ENCODE measurements at regions of chrX and their contacts with region 1.

Region 1: GRCh38 chrX:150693775-150694574 is 779 bp downstream of the MTMR1 start:
- DNase-seq: no peak
- ATAC-seq: peak; percentile 74
- H3K4me3 ChIP-seq: peak overlapping the region; percentile 62
- H3K27ac ChIP-seq: peak overlapping the region; percentile 90
- H3K4me1 ChIP-seq: peaks cover 13% of the 10 kb centered on the region
- H3K27me3 ChIP-seq: no peaks in the 10 kb centered on the region
- CTCF ChIP-seq: no peak
- EP300 ChIP-seq: no peak
- POLR2A ChIP-seq: no peak
- RAD21 ChIP-seq: no peak

Region 2: DNA sequence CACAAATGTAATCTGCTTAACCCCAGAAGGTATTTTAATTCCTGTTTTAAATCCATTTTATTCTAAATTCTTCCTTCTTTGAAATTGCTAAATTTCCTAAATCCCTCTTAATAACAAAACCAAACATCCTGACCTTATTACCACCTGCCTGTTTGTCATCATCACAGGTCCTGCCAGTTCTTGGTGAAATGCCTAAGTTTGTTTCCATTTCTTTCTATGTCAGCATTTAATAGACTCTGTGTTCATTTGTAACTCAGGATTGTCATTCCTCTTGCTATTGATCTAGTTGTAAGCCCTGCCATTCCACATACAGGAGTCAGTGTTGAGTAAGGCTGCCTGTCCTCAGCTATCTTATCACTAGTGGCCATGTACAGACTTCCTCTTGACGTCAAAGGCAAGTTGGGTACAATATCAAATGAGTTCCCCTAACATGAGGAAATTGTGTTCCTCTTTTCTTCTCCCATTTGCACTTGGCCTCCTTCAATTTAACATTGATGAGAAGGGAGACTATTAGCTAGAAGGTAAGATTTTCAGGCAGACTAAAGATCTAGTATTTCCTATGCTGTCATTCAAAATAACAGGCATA is 1753.5 kb before region 1 on chrX:
- CTCF ChIA-PET with region 1: no interaction called
- POLR2A ChIA-PET with region 1: no interaction called
- RAD21 ChIA-PET with region 1: no interaction called
- SMC1A ChIA-PET with region 1: no interaction called
- in situ Hi-C with region 1: no loop called
- intact Hi-C with region 1: no loop called
- DNase-seq: no peak
- ATAC-seq: no peak
- H3K4me3 ChIP-seq: no peak overlapping the region
- H3K27ac ChIP-seq: no peak overlapping the region
- H3K4me1 ChIP-seq: no peaks in the 10 kb centered on the region
- H3K27me3 ChIP-seq: no peaks in the 10 kb centered on the region
- CTCF ChIP-seq: no peak
- EP300 ChIP-seq: no peak
- POLR2A ChIP-seq: no peak
- RAD21 ChIP-seq: no peak

Region 3: GRCh38 chrX:149504915-149505651 is 1188.9 kb before region 1 on chrX and contains the start of gene IDS:
- CTCF ChIA-PET with region 1: no interaction called
- POLR2A ChIA-PET with region 1: no interaction called
- RAD21 ChIA-PET with region 1: no interaction called
- SMC1A ChIA-PET with region 1: no interaction called
- in situ Hi-C with region 1: loop called (anchors 25 kb)
- intact Hi-C with region 1: no loop called
- DNase-seq: peak; percentile 37
- ATAC-seq: peak; percentile 80
- H3K4me3 ChIP-seq: peak within 1 kb of the TSS; percentile 65
- H3K27ac ChIP-seq: peak within 1 kb of the TSS; percentile 67
- H3K4me1 ChIP-seq: peaks cover 21% of the 10 kb centered on the region
- H3K27me3 ChIP-seq: no peaks in the 10 kb centered on the region; a peak in 2 of 4 replicates
- CTCF ChIP-seq: no peak
- EP300 ChIP-seq: no peak
- POLR2A ChIP-seq: peak; percentile 92
- RAD21 ChIP-seq: no peak
- polyA plus RNA-seq, gene IDS: 6.1 to 9.6 TPM

Region 4: GRCh38 chrX:150575416-150575808 is 118.6 kb before region 1 on chrX:
- CTCF ChIA-PET with region 1: no interaction called
- POLR2A ChIA-PET with region 1: no interaction called
- RAD21 ChIA-PET with region 1: no interaction called
- SMC1A ChIA-PET with region 1: no interaction called
- in situ Hi-C with region 1: no loop called
- intact Hi-C with region 1: loop called (anchors 5 kb)
- DNase-seq: no peak
- ATAC-seq: peak; percentile 35
- H3K4me3 ChIP-seq: peak overlapping the region; percentile 34; the same call in 1 of the 2 replicates
- H3K27ac ChIP-seq: peak overlapping the region; percentile 34
- H3K4me1 ChIP-seq: peaks cover 14% of the 10 kb centered on the region; the same call in 1 of the 2 replicates
- H3K27me3 ChIP-seq: no peaks in the 10 kb centered on the region
- CTCF ChIP-seq: no peak
- EP300 ChIP-seq: no peak
- POLR2A ChIP-seq: no peak
- RAD21 ChIP-seq: no peak

Region 5: DNA sequence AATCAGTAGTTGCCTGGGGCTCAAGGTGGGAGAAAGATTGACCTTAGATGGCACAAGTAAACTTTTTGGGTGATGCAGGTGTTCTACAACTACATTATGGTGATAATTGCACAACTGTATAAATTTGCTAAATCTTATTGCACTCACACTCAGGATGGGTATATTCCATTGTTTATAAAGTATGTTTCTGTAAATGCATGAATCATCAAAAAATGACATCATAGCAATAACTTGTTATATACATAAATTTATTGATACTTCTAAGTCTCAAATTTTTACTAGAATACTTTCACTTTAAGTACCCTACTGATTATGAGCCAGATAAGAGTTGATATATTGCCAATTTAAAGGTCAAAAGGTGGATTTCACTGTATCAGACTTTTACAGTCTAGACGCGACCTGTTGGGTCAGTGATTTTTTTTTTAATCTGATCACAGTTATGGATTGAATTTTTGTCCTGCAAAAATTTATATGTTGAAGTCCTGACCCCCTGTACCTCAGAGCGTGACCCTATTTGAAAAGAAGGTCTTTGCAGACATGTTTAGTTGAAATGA is 38.2 kb before region 1 on chrX:
- CTCF ChIA-PET with region 1: no interaction called
- POLR2A ChIA-PET with region 1: no interaction called
- RAD21 ChIA-PET with region 1: no interaction called
- SMC1A ChIA-PET with region 1: no interaction called
- in situ Hi-C with region 1: no loop called
- intact Hi-C with region 1: no loop called
- DNase-seq: no peak
- ATAC-seq: no peak
- H3K4me3 ChIP-seq: no peak overlapping the region
- H3K27ac ChIP-seq: no peak overlapping the region
- H3K4me1 ChIP-seq: no peaks in the 10 kb centered on the region
- H3K27me3 ChIP-seq: no peaks in the 10 kb centered on the region
- CTCF ChIP-seq: no peak
- EP300 ChIP-seq: no peak
- POLR2A ChIP-seq: no peak
- RAD21 ChIP-seq: no peak

Region 6: GRCh38 chrX:150683536-150684146 is 10.3 kb before region 1 on chrX:
- CTCF ChIA-PET with region 1: interaction called, 31 read pairs
- POLR2A ChIA-PET with region 1: interaction called, 3 read pairs
- RAD21 ChIA-PET with region 1: interaction called, 6 read pairs
- SMC1A ChIA-PET with region 1: interaction called, 19 read pairs
- in situ Hi-C with region 1: no loop called
- intact Hi-C with region 1: no loop called
- DNase-seq: no peak
- ATAC-seq: peak; percentile 76
- H3K4me3 ChIP-seq: no peak overlapping the region
- H3K27ac ChIP-seq: no peak overlapping the region
- H3K4me1 ChIP-seq: no peaks in the 10 kb centered on the region
- H3K27me3 ChIP-seq: no peaks in the 10 kb centered on the region
- CTCF ChIP-seq: peak; percentile 54 to 64 (median 55); a peak in 5 of 6 replicates
- EP300 ChIP-seq: no peak
- POLR2A ChIP-seq: no peak
- RAD21 ChIP-seq: peak; percentile 60

Region 7: DNA sequence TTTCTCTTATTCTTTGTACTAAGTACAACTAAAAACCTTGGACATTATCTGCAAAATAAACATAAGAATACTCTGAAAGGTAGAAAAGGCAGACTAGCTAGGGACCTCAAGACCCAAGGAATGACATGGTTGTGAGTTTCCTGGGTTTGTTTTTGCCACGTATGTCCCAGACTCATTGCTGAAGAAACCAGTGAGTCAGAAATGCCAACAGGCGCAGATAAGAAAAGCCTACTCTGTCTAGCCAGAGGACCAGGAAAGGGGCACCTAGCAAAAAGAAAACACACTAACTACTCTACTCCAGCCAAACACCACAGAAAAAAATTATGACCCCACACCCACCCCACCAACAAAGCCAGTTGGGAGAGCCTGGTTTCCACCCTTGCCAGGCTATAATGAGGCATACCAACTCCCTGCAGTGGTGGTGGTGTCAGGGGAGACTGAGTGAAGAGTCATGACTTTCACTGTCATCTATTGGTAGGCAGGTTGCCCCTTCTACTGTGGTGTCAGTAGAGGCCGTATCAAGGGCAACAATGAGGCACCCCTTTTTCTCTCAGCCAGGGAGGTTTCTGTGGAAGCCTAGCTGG is 10.1 kb after region 1 on chrX:
- CTCF ChIA-PET with region 1: interaction called, 7 read pairs
- POLR2A ChIA-PET with region 1: interaction called, 5 read pairs
- RAD21 ChIA-PET with region 1: no interaction called
- SMC1A ChIA-PET with region 1: interaction called, 14 read pairs
- in situ Hi-C with region 1: no loop called
- intact Hi-C with region 1: no loop called
- DNase-seq: no peak
- ATAC-seq: no peak
- H3K4me3 ChIP-seq: no peak overlapping the region
- H3K27ac ChIP-seq: no peak overlapping the region
- H3K4me1 ChIP-seq: no peaks in the 10 kb centered on the region
- H3K27me3 ChIP-seq: no peaks in the 10 kb centered on the region
- CTCF ChIP-seq: no peak
- EP300 ChIP-seq: no peak
- POLR2A ChIP-seq: no peak
- RAD21 ChIP-seq: no peak

Measured in GM12878 (cell line).